ENCODE measurements at regions of chr11 and their contacts with region 1.

Region 1: GRCh38 chr11:57530596-57531507 is at the start of gene TIMM10:
- DNase-seq: peak; percentile 98
- H3K4me3 Mint-ChIP-seq: peak within 1 kb of the TSS; percentile 89
- H3K27ac Mint-ChIP-seq: peak within 1 kb of the TSS; percentile 85
- H3K4me1 Mint-ChIP-seq: peaks cover 32% of the 10 kb centered on the region
- H3K27me3 Mint-ChIP-seq: no peaks in the 10 kb centered on the region
- total RNA-seq, gene TIMM10: 108 and 112 TPM in 2 replicates

Region 2: GRCh38 chr11:57345555-57346211 is 185.2 kb before region 1 on chr11:
- intact Hi-C with region 1: loop called (anchors 1 kb)
- DNase-seq: peak; percentile 89
- H3K4me3 Mint-ChIP-seq: no peak overlapping the region
- H3K27ac Mint-ChIP-seq: no peak overlapping the region
- H3K4me1 Mint-ChIP-seq: peaks cover 7% of the 10 kb centered on the region
- H3K27me3 Mint-ChIP-seq: peaks cover 16% of the 10 kb centered on the region

Region 3: DNA sequence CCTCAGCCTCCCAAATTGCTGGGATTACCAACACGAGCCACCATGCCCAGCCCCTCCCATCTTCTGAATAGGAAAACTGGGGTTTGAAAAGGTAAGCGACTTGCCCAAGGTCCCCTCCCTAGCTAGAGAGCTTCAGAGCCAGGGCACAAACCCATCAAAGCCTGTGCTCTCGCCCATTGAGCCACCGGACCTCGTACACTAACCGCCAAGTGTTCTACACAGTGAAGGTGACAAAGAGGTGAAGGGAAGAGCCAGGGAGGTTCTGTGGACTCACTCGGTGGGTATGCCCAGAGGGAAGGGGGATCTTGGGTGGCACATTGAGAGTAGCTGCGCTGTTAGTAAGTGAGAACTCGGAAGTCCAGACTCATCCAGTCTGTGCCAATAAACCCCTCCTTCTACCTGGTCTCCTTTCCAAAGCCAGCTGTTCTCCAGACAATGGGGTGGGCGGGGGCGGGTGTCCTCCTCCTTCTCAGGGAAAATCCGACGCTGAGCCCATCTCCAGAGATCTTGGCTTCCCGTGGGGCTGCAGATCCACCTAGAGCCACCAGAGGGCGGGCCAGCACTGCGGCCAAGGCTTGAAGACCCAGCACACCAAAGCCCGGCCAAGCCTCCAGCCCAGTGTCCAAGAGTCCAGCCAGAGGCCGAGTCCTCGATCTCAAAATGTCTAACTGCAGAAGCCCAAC is 73.8 kb before region 1 on chr11:
- intact Hi-C with region 1: loop called (anchors 1 kb)
- DNase-seq: peak; percentile 93
- H3K4me3 Mint-ChIP-seq: peak overlapping the region; percentile 62
- H3K27ac Mint-ChIP-seq: peak overlapping the region; percentile 29
- H3K4me1 Mint-ChIP-seq: peaks cover 26% of the 10 kb centered on the region
- H3K27me3 Mint-ChIP-seq: peaks cover 52% of the 10 kb centered on the region

Region 4: GRCh38 chr11:57515332-57516060 is 15.4 kb before region 1 on chr11 and contains the start of gene SLC43A1:
- intact Hi-C with region 1: loop called (anchors 1 kb)
- DNase-seq: peak; percentile 83
- H3K4me3 Mint-ChIP-seq: peak within 1 kb of the TSS; percentile 97
- H3K27ac Mint-ChIP-seq: peak within 1 kb of the TSS; percentile 91
- H3K4me1 Mint-ChIP-seq: peaks cover 27% of the 10 kb centered on the region
- H3K27me3 Mint-ChIP-seq: peaks cover 4% of the 10 kb centered on the region
- total RNA-seq, gene SLC43A1: 35.3 and 35.8 TPM in 2 replicates

Region 5: GRCh38 chr11:57552479-57552878 is 21.6 kb after region 1 on chr11:
- intact Hi-C with region 1: no loop called
- DNase-seq: no peak
- H3K4me3 Mint-ChIP-seq: no peak overlapping the region
- H3K27ac Mint-ChIP-seq: peak overlapping the region; percentile 25
- H3K4me1 Mint-ChIP-seq: peaks cover 4% of the 10 kb centered on the region
- H3K27me3 Mint-ChIP-seq: no peaks in the 10 kb centered on the region

Region 6: GRCh38 chr11:57604296-57605027 is 73.6 kb after region 1 on chr11:
- intact Hi-C with region 1: no loop called
- DNase-seq: no peak
- H3K4me3 Mint-ChIP-seq: no peak overlapping the region
- H3K27ac Mint-ChIP-seq: no peak overlapping the region
- H3K4me1 Mint-ChIP-seq: no peaks in the 10 kb centered on the region
- H3K27me3 Mint-ChIP-seq: peaks cover 13% of the 10 kb centered on the region

Region 7: GRCh38 chr11:57667736-57668435 is 137.0 kb after region 1 on chr11 and contains the start of gene ZDHHC5:
- intact Hi-C with region 1: loop called (anchors 1 kb)
- DNase-seq: peak; percentile 100
- H3K4me3 Mint-ChIP-seq: peak within 1 kb of the TSS; percentile 86
- H3K27ac Mint-ChIP-seq: peak within 1 kb of the TSS; percentile 97
- H3K4me1 Mint-ChIP-seq: peaks cover 35% of the 10 kb centered on the region
- H3K27me3 Mint-ChIP-seq: no peaks in the 10 kb centered on the region
- total RNA-seq, gene ZDHHC5: 78.4 and 80.9 TPM in 2 replicates

Region 8: GRCh38 chr11:57741132-57742086 is 210.6 kb after region 1 on chr11 and contains the start of gene SELENOH:
- intact Hi-C with region 1: loop called (anchors 1 kb)
- DNase-seq: peak; percentile 98
- H3K4me3 Mint-ChIP-seq: peak within 1 kb of the TSS; percentile 93
- H3K27ac Mint-ChIP-seq: peak within 1 kb of the TSS; percentile 96
- H3K4me1 Mint-ChIP-seq: peaks cover 30% of the 10 kb centered on the region
- H3K27me3 Mint-ChIP-seq: no peaks in the 10 kb centered on the region
- total RNA-seq, gene SELENOH: 211 and 216 TPM in 2 replicates